ENCODE measurements at regions of chr10 and their contacts with region 1.

Region 1: GRCh38 chr10:79442171-79443040 is 3.0 kb downstream of the ZCCHC24 start:
- DNase-seq: peak; percentile 81 to 98 (median 88)

Region 2: GRCh38 chr10:79266543-79267312 is 175.7 kb before region 1 on chr10:
- intact Hi-C with region 1: no loop called
- DNase-seq: peak in 5 of 10 donors; percentile 35 to 93 (median 72)

Region 3: GRCh38 chr10:79409726-79410085 is 32.7 kb before region 1 on chr10:
- intact Hi-C with region 1: loop called (anchors 1 kb)
- DNase-seq: peak; percentile 87 to 100 (median 94)